BJ (cell line): ENCODE measurements at regions of chr5 and their contacts with region 1.

Region 1: GRCh38 chr5:149442563-149443182 is 63.6 kb upstream of the IL17B start:
- DNase-seq: no peak
- H3K4me3 ChIP-seq: no peak overlapping the region
- H3K27me3 ChIP-seq: no peaks in the 10 kb centered on the region
- CTCF ChIP-seq: peak; percentile 96

Region 2: GRCh38 chr5:149277801-149278200 is 164.9 kb before region 1 on chr5:
- CTCF ChIA-PET with region 1: no interaction called
- POLR2A ChIA-PET with region 1: no interaction called
- DNase-seq: no peak
- H3K4me3 ChIP-seq: no peak overlapping the region
- H3K27me3 ChIP-seq: no peaks in the 10 kb centered on the region
- CTCF ChIP-seq: no peak

Region 3: GRCh38 chr5:149367249-149367971 is 75.3 kb before region 1 on chr5:
- CTCF ChIA-PET with region 1: interaction called, 36 read pairs
- POLR2A ChIA-PET with region 1: no interaction called
- DNase-seq: no peak
- H3K4me3 ChIP-seq: no peak overlapping the region
- H3K27me3 ChIP-seq: no peaks in the 10 kb centered on the region
- CTCF ChIP-seq: peak; percentile 91

Region 4: GRCh38 chr5:149387081-149387631 is 55.5 kb before region 1 on chr5:
- CTCF ChIA-PET with region 1: interaction called, 29 read pairs
- POLR2A ChIA-PET with region 1: interaction called, 4 read pairs
- DNase-seq: peak; percentile 97
- H3K4me3 ChIP-seq: no peak overlapping the region
- H3K27me3 ChIP-seq: no peaks in the 10 kb centered on the region
- CTCF ChIP-seq: no peak

Region 5: GRCh38 chr5:149485655-149486425 is 43.2 kb after region 1 on chr5:
- CTCF ChIA-PET with region 1: interaction called, 11 read pairs
- POLR2A ChIA-PET with region 1: interaction called, 9 read pairs
- DNase-seq: peak; percentile 100
- H3K4me3 ChIP-seq: no peak overlapping the region
- H3K27me3 ChIP-seq: no peaks in the 10 kb centered on the region
- CTCF ChIP-seq: no peak

Region 6: GRCh38 chr5:149544028-149544420 is 101.4 kb after region 1 on chr5:
- CTCF ChIA-PET with region 1: interaction called, 107 read pairs
- POLR2A ChIA-PET with region 1: interaction called, 3 read pairs
- DNase-seq: no peak
- H3K4me3 ChIP-seq: no peak overlapping the region
- H3K27me3 ChIP-seq: no peaks in the 10 kb centered on the region
- CTCF ChIP-seq: no peak

Region 7: DNA sequence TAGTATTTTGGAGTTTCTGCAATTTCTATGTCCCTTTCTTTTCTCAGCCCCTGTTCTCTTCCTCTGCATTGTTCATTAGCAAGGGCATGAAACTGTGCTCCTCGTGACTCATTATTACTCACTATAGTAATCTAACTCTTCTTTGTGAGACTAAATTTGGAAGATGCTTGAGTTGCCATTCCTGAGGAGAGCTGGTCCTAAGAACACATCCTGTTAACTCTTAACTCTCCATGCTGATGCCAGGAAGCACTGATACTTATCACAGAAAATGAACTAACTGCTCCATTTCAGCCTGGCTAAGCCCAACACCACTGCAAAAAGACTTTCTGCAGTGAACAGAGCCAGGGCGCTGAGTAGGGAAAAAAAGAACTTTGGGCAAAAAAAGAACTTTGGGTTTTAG is 119.2 kb after region 1 on chr5:
- CTCF ChIA-PET with region 1: interaction called, 93 read pairs
- POLR2A ChIA-PET with region 1: interaction called, 8 read pairs
- DNase-seq: peak; percentile 80
- H3K4me3 ChIP-seq: no peak overlapping the region
- H3K27me3 ChIP-seq: no peaks in the 10 kb centered on the region
- CTCF ChIP-seq: no peak

Region 8: DNA sequence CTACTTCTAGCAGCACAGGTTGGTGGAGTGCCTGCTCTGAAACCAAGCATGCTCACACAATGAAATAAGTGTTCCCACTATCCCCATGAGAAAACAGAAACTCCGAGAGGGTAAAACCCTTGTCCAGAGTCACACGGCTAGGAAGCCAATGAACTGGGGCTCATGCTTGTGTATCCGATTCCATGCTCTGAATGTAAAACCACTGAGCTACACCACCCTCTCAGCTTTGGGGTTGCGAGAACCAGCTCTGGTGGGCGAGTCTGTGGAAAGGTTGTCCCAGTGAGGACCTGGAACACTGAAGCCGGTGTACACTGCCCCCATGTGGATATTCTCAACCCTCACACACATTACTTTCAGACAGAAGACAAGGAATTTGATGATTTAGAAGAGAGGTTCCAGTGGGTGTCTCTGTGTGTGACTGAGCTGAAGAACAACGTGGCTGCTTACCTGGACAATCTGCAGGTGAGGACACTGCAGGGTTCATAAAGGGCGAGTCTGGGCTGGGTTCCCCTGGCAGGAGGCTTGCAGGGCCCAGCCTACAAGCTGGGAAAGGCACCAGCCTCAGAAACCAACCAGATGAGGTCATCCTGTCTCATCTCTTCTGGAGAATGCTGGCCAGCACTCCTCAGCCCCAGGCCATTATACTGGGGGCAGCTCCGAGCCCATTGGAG is 176.0 kb after region 1 on chr5:
- CTCF ChIA-PET with region 1: interaction called, 20 read pairs
- POLR2A ChIA-PET with region 1: no interaction called
- DNase-seq: peak; percentile 35
- H3K4me3 ChIP-seq: no peak overlapping the region
- H3K27me3 ChIP-seq: peaks cover 3% of the 10 kb centered on the region
- CTCF ChIP-seq: peak; percentile 77